KBM-7 (cell line): ENCODE measurements at regions of chr7 and their contacts with region 1.

Region 1: GRCh38 chr7:81499262-81500116 is 270.4 kb downstream of the HGF start:
- DNase-seq: peak; percentile 69

Region 2: DNA sequence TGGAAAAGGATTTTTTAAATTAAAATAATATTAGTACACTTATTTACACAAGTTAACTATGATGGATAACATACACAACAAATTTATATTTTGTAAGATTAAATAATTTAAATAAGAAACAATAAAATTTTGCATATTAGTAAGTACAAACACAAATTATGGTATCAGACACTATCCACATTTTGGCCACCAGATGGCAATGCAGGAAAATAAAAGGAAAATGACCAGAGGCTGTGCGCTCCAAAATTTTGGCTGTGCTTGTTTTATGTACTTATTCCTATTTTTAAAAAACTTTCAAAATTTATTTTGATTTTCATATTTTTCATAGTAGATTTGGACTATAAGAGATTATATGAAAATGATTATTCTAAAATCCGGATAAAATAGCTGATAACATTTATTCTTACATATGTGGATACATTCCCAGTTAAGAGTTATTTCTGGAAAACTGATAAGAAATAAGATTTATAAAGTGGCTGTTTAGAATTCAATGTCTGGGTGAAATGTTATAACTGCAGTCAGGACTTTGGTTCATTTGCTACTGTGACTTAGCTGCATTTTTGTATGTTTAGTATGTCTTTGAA is 545.1 kb after region 1 on chr7:
- in situ Hi-C with region 1: loop called (anchors 25 kb)
- DNase-seq: peak; percentile 52